CD8-positive, alpha-beta T cell (primary cell): ENCODE measurements at regions of chr11 and their contacts with region 1.

Region 1: DNA sequence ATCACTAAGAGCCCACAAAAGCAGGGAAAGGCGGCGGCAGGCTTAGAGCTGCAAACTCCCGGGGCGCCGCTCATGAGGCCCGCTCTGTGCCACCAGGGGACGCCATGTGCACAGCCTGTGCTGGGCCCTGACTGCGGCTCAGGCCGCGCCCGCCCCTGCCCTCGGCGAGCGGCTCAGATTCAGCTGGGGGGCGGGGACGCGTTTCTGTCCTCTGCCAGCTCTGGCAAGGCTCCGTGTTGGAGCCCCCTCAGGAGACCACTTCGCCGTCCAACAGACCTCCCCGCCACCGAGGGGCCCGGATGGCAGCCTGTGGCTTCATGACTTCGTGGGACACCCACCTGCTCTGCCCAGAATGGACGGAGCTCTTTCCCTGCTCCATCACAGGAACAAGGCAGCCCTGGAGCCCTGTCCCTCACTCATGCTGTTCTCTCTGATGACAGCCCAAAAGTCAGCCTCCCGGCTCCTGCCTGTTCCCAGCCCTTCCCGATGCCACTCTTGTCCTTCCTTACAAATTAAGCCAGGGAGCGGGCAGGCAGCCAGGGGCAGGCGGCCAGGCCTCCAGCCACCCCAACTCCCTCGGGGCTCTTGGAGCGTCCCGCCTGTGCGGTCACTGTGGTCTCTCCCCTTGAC is 69.1 kb downstream of the NAT10 start:
- DNase-seq: peak; percentile 61 to 87 (median 81)
- ATAC-seq: peak; percentile 100
- H3K4me3 ChIP-seq: peak overlapping the region in 1 of 2 experiments; percentile 18
- H3K4me3 Mint-ChIP-seq: peak overlapping the region; percentile 43
- H3K27ac ChIP-seq: no peak overlapping the region
- H3K27ac Mint-ChIP-seq: no peak overlapping the region
- H3K4me1 ChIP-seq: peaks cover 4% of the 10 kb centered on the region
- H3K4me1 Mint-ChIP-seq: peaks cover 3% of the 10 kb centered on the region
- H3K27me3 ChIP-seq: no peaks in the 10 kb centered on the region
- H3K27me3 Mint-ChIP-seq: peaks cover 4% of the 10 kb centered on the region
- CTCF ChIP-seq: peak; percentile 79

Region 2: DNA sequence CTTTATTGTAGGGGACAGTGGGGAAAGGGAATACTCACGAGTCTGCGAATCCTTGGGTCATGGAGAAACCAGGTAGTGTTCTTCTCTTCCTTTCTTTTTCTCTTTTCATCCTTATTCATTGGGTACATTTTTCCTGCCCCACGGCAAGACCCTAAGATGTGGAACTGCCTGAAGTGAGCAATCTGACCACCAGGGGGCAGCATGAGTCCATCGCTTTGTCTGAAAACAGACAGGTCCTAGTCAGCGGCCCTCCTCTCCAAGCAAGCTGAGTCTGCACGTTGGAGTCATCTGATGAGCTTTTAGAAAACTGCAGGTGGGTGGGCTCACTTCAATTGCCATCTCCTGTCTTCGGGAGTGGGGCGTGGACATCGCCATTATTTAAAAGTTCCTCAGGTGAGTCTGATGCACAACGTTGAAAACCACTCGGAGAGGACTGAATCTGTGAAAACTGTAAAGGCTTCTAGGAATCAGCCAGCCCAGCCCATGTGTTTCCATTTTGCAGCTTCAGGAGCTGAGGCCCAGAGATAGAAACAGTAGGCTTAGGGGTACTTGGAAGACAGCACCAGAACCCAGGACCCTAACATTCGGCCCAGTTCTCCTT is 366.2 kb before region 1 on chr11:
- CTCF ChIA-PET with region 1: interaction called, 3 read pairs
- POLR2A ChIA-PET with region 1: no interaction called
- intact Hi-C with region 1: loop called in 1 of 2 experiments (anchors 5 kb)
- DNase-seq: peak; percentile 69 to 93 (median 83)
- ATAC-seq: peak; percentile 97
- H3K4me3 ChIP-seq: no peak overlapping the region
- H3K4me3 Mint-ChIP-seq: no peak overlapping the region
- H3K27ac ChIP-seq: no peak overlapping the region
- H3K27ac Mint-ChIP-seq: no peak overlapping the region
- H3K4me1 ChIP-seq: no peaks in the 10 kb centered on the region
- H3K4me1 Mint-ChIP-seq: peaks cover 2% of the 10 kb centered on the region
- H3K27me3 ChIP-seq: no peaks in the 10 kb centered on the region
- H3K27me3 Mint-ChIP-seq: peaks cover 9% of the 10 kb centered on the region
- CTCF ChIP-seq: peak; percentile 90

Region 3: DNA sequence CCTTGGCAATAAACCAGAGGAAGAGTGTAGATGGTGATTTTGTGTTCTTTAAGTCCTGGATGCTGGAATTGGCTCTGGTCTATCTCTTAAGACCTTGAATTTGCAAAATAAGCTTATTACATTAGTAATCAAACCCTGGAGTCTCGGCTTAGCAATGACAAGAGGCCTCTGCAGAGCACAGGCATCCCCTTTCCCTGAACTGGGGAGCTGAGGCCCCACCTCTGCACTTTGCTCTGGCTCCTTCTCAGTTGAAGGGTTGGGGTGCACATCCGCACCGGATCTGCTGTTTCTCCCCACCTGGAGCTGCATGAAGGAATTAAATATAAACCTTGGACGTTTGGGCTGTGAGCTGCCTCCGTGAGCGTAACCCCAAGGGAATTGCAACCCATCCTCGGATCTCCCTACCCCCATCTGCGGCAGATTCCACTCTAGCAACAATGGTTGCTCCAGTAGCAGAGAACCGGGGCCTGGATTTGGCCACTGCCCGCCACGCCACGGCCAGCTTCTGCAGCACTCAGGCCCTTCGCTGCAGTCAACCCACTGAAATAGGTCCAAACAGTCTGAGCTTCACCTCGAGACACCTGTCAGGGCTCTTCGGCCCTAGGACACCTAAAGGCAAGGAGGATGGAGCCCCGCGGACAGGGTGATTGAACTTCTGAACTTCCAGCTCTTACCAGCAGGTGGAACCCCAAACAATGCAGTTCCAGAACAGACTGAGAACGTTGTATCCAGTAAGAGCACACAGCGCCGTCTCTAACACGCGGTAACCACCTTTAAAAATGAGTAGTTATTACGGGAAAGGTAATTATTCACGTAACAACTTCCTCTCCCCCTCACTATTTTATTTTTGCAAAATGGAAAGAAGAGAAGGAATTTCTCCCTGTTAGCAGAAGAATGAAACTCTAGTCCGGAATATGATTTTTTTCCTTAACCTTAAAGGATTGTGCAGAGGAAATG is 177.8 kb before region 1 on chr11:
- CTCF ChIA-PET with region 1: interaction called, 42 read pairs
- POLR2A ChIA-PET with region 1: no interaction called
- intact Hi-C with region 1: loop called (anchors 1 to 2 kb)
- DNase-seq: peak; percentile 50 to 84 (median 75)
- ATAC-seq: peak; percentile 100
- H3K4me3 ChIP-seq: no peak overlapping the region
- H3K4me3 Mint-ChIP-seq: peak overlapping the region; percentile 59
- H3K27ac ChIP-seq: no peak overlapping the region
- H3K27ac Mint-ChIP-seq: no peak overlapping the region
- H3K4me1 ChIP-seq: peaks cover 7% of the 10 kb centered on the region
- H3K4me1 Mint-ChIP-seq: peaks cover 13% of the 10 kb centered on the region
- H3K27me3 ChIP-seq: peaks cover 0 to 2% of the 10 kb centered on the region in 2 experiments
- H3K27me3 Mint-ChIP-seq: peaks cover 18% of the 10 kb centered on the region
- CTCF ChIP-seq: peak; percentile 75

Region 4: DNA sequence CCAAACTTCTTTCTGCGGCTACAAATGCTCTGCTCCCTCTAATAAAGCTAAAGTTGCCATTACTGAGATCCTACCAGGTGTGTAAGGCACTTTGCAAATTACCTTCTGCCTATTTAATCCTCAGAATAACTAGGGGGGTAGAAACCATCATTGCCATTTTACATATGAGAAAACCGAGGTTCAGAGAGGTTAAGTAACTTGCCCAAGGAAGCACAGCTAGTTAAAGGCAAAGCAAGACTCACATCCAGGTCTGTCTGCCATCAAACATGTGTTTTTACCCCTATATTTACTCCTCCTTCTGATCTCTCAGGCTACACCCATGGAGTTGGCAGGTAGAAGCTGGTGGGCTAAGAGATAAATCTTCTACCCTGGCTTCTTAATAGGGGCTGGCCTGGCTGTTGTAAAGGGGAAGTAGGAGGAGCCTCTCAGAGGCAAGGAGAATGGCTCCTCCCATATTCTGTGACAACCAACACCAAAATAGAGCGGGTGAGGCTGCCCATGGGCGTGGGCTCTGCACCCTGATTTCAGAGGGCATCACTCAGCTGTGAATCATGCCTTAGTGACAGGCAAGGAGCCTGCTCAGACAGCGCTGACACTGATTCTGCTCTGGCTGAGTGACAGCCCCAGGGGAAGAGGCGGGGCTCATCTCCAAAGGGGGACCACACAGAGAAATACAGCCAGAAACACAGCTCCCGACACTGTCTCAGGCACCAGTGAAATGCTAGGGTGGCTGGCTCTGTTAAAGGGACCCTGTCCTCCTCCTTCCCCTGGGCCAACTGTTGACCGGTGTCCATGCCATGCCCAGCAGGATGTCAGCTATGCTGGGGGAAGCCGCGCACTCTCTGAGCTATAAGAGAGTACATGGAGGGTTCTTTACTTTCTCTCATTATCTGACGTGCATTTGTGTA is 76.5 kb after region 1 on chr11:
- CTCF ChIA-PET with region 1: interaction called, 26 read pairs
- POLR2A ChIA-PET with region 1: no interaction called
- intact Hi-C with region 1: loop called (anchors 2 to 5 kb)
- DNase-seq: peak; percentile 33 to 90 (median 79)
- ATAC-seq: peak; percentile 94
- H3K4me3 ChIP-seq: peak overlapping the region; percentile 1 to 47
- H3K4me3 Mint-ChIP-seq: peak overlapping the region; percentile 66
- H3K27ac ChIP-seq: no peak overlapping the region
- H3K27ac Mint-ChIP-seq: peak overlapping the region; percentile 84
- H3K4me1 ChIP-seq: peaks cover 51% of the 10 kb centered on the region
- H3K4me1 Mint-ChIP-seq: peaks cover 54% of the 10 kb centered on the region
- H3K27me3 ChIP-seq: no peaks in the 10 kb centered on the region
- H3K27me3 Mint-ChIP-seq: peaks cover 3% of the 10 kb centered on the region
- CTCF ChIP-seq: no peak

Region 5: DNA sequence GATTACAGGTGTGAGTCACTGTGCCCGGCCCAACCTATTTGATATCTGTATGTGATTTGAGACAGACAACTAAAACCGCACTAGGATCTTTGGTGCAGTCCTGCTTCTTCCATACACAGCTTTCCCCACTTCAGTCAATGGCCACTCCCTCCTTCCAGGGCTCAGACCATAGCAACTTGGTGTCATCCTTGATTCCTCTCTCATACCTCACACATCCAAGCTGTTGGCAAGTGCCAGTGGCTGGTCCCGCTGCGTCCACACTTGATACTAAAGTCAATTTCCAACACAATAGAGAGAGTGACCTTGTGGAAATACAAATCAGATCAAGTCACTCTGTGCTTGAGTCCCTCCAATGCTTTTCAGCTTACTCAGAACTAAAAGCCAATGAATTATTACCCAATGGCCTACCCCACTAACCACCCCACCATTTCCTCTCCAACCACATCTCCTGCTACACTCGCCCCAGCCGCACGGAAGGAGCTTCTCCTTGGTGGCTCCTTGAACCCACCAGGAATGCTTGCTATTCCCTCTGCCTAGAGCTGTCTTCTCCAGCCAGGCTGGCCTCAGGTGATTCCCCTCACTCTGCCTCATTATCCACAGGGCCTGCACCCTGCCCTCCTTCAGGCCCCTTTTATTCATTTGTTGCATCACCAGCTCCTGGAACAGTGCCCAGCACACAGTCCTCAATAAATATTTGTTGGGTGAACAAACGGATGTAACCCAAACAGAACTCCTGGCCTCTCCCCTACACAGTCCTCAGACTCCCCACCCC is 170.4 kb after region 1 on chr11:
- CTCF ChIA-PET with region 1: interaction called, 119 read pairs
- POLR2A ChIA-PET with region 1: no interaction called
- intact Hi-C with region 1: no loop called
- DNase-seq: no peak
- ATAC-seq: no peak
- H3K4me3 ChIP-seq: no peak overlapping the region
- H3K4me3 Mint-ChIP-seq: no peak overlapping the region
- H3K27ac ChIP-seq: no peak overlapping the region
- H3K27ac Mint-ChIP-seq: no peak overlapping the region
- H3K4me1 ChIP-seq: no peaks in the 10 kb centered on the region
- H3K4me1 Mint-ChIP-seq: no peaks in the 10 kb centered on the region
- H3K27me3 ChIP-seq: no peaks in the 10 kb centered on the region
- H3K27me3 Mint-ChIP-seq: no peaks in the 10 kb centered on the region
- CTCF ChIP-seq: no peak

Region 6: DNA sequence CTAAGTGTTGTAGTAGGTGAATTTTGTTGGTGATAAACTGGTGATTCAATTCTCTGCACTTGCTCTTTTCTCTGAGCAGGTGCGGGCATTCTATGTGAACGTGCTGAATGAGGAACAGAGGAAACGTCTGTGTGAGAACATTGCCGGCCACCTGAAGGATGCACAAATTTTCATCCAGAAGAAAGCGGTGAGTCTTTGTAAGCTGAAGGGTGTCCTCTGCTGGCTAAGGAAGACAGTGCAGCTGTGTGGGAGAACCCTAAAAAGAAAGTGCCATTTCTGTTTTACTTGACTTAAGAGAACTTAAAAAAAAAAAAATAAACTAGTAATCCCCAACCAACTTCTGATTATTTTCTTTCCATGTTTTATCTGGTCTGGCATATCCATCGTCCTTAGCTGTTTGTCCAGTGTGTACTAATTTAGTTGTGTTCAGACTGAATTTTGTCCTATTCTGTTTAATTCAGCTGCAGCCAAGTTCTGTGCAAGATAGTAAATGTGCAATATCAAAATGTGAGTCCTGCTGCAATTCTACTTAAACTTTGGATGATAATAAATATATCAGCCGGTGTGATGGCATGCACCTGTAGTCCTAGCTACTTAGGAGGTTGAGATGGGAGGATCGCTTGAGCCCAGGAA is 293.8 kb after region 1 on chr11:
- CTCF ChIA-PET with region 1: interaction called, 18 read pairs
- POLR2A ChIA-PET with region 1: no interaction called
- intact Hi-C with region 1: loop called (anchors 1 to 2 kb)
- DNase-seq: peak in 6 of 9 experiments; percentile 5 to 55 (median 32)
- ATAC-seq: peak; percentile 76
- H3K4me3 ChIP-seq: no peak overlapping the region
- H3K4me3 Mint-ChIP-seq: no peak overlapping the region
- H3K27ac ChIP-seq: no peak overlapping the region
- H3K27ac Mint-ChIP-seq: no peak overlapping the region
- H3K4me1 ChIP-seq: no peaks in the 10 kb centered on the region
- H3K4me1 Mint-ChIP-seq: peaks cover 2% of the 10 kb centered on the region
- H3K27me3 ChIP-seq: no peaks in the 10 kb centered on the region
- H3K27me3 Mint-ChIP-seq: no peaks in the 10 kb centered on the region
- CTCF ChIP-seq: peak; percentile 65